CD4-positive, alpha-beta memory T cell (primary cell): ENCODE measurements at regions of chr5 and their contacts with region 1.

Region 1: DNA sequence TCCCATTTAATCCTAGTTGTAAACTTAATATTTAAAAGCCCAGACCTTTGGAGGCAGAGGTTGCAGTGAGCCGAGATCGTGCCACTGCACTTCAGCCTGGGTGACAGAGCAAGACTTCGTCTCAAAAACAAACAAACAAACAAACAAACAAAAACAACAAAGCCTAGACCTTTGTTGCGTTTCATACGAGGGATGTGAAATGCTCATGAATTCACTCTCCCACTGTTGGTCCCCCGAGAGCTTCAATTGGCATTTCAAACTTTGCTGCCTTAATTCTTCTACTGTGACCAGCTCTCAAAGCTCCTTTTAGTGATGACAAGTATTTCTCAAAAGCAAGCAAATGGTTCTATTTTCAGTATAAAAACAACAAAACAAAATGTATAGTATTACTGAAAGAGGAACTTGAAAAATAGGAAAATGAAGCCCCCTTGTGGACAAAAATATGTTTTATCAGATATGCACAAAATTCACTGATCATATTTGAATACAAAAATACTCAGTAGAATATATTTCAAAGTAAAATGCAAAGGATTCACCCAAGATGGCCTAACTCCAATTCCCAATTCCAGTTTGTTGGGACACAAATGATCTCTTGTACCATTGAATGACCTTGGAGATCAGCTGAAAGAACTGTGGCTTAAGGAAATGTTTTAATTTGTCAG is 140.4 kb downstream of the ESM1 start:
- DNase-seq: peak in 4 of 5 donors; percentile 54 to 63 (median 56)
- H3K4me3 ChIP-seq: no peak overlapping the region
- H3K4me3 Mint-ChIP-seq: peak overlapping the region in 5 of 8 donors; percentile 9 to 68 (median 49)
- H3K27ac ChIP-seq: no peak overlapping the region
- H3K27ac Mint-ChIP-seq: peak overlapping the region in 2 of 7 donors; percentile 12 to 26
- H3K4me1 ChIP-seq: no peaks in the 10 kb centered on the region
- H3K4me1 Mint-ChIP-seq: peaks cover 0 to 4% (median 2%) of the 10 kb centered on the region in 4 donors
- H3K27me3 ChIP-seq: no peaks in the 10 kb centered on the region
- H3K27me3 Mint-ChIP-seq: peaks cover 0 to 9% of the 10 kb centered on the region in 2 donors

Region 2: GRCh38 chr5:54492178-54492577 is 352.9 kb before region 1 on chr5:
- CTCF ChIA-PET with region 1: interaction called, 18 read pairs
- POLR2A ChIA-PET with region 1: no interaction called
- intact Hi-C with region 1: loop called (anchors 1 kb)
- DNase-seq: no peak
- H3K4me3 ChIP-seq: no peak overlapping the region
- H3K4me3 Mint-ChIP-seq: no peak overlapping the region
- H3K27ac ChIP-seq: no peak overlapping the region
- H3K27ac Mint-ChIP-seq: no peak overlapping the region
- H3K4me1 ChIP-seq: no peaks in the 10 kb centered on the region
- H3K4me1 Mint-ChIP-seq: peaks cover 0 to 4% (median 0%) of the 10 kb centered on the region in 4 donors
- H3K27me3 ChIP-seq: no peaks in the 10 kb centered on the region
- H3K27me3 Mint-ChIP-seq: peaks cover 3 to 7% of the 10 kb centered on the region in 2 donors

Region 3: GRCh38 chr5:54610197-54610944 is 234.7 kb before region 1 on chr5:
- CTCF ChIA-PET with region 1: interaction called, 11 read pairs
- POLR2A ChIA-PET with region 1: interaction called, 10 read pairs
- intact Hi-C with region 1: no loop called
- DNase-seq: peak; percentile 43 to 60 (median 55)
- H3K4me3 ChIP-seq: peak overlapping the region; percentile 3 to 49
- H3K4me3 Mint-ChIP-seq: peak overlapping the region; percentile 54 to 86 (median 77)
- H3K27ac ChIP-seq: no peak overlapping the region
- H3K27ac Mint-ChIP-seq: peak overlapping the region; percentile 64 to 84 (median 68)
- H3K4me1 ChIP-seq: peaks cover 22% of the 10 kb centered on the region
- H3K4me1 Mint-ChIP-seq: peaks cover 23 to 25% (median 25%) of the 10 kb centered on the region in 4 donors
- H3K27me3 ChIP-seq: no peaks in the 10 kb centered on the region
- H3K27me3 Mint-ChIP-seq: no peaks in the 10 kb centered on the region

Region 4: DNA sequence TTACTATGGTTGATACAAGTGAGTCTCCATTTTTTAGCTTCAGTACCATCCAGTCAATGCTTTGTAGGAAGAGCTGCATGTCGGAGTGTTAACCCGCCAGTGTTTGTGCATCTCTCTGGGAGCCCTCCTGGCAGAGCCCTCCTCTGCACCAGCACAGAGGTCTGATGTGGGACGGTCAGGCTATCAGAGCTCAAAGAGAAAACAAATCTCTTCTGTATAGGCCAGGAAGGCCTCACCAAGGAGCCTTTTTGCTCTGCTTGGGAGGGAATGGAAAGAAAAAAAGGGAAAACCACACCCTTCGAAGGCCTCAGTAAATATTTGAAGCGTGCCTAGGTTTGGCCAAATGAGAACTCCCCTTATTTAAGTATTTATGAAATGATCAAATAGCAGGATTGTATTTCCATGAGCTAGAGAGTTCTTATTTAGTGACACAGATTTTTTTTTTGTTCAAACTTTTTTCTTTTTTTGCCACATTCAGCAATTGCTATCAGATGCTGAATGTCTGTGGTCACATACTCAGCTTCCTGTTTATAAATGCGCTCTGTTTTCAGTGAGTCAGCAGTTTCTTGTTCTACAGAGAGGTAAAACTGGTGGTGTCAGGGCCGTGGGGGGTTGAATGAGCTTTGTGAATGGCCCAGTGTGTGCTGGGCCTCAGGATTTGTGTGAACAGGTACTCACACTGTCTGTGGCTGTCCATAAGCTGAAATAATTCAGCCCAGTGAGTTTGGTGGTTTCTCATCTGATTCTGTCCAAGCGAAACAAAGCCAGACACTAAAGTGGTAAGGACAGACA is 100.8 kb before region 1 on chr5:
- CTCF ChIA-PET with region 1: interaction called, 30 read pairs
- POLR2A ChIA-PET with region 1: interaction called, 5 read pairs
- intact Hi-C with region 1: loop called (anchors 10 kb)
- DNase-seq: peak; percentile 69 to 78 (median 75)
- H3K4me3 ChIP-seq: no peak overlapping the region
- H3K4me3 Mint-ChIP-seq: peak overlapping the region; percentile 24 to 84 (median 60)
- H3K27ac ChIP-seq: peak overlapping the region; percentile 20
- H3K27ac Mint-ChIP-seq: peak overlapping the region; percentile 82 to 93 (median 84)
- H3K4me1 ChIP-seq: peaks cover 49% of the 10 kb centered on the region
- H3K4me1 Mint-ChIP-seq: peaks cover 25 to 42% (median 33%) of the 10 kb centered on the region in 4 donors
- H3K27me3 ChIP-seq: no peaks in the 10 kb centered on the region
- H3K27me3 Mint-ChIP-seq: no peaks in the 10 kb centered on the region

Region 5: DNA sequence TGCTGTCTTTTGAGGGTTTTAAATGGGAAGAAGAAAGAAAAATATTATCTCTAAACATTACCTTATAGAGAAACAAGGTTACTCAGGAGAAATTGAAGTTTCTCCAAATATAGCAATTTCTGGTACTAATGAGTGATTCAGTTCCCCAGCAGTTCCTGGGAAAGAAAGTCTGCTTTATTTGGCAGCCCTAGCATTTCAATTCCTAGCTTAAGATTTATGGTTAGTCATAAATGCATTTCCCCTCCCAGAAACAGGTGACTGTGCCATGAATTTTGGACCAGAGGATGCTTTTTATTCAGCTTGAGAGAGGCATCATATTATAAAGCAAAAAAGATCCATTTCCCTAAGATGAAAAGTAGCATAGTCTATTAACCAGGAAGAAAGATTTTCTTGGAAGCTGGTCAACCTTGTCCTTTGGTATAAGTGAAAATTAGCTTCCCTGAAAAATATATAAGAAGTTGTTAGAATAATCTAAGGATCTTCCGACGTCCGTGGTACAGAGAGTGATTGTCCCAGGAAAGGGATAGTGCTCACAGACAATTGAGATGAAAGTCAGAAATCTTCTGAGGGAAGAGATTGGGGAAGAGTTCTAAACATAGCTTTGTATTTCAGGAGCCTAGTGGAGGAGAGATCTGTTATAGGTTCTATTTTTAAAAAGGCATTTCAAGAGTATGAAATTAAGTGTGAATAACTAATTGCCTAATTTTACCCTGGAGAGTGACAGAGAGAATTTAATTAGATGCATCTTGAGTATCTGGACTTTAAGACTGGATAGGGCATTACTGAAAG is 24.5 kb before region 1 on chr5:
- CTCF ChIA-PET with region 1: interaction called, 10 read pairs
- POLR2A ChIA-PET with region 1: interaction called, 4 read pairs
- intact Hi-C with region 1: no loop called
- DNase-seq: no peak
- H3K4me3 ChIP-seq: no peak overlapping the region
- H3K4me3 Mint-ChIP-seq: no peak overlapping the region
- H3K27ac ChIP-seq: no peak overlapping the region
- H3K27ac Mint-ChIP-seq: no peak overlapping the region
- H3K4me1 ChIP-seq: no peaks in the 10 kb centered on the region
- H3K4me1 Mint-ChIP-seq: no peaks in the 10 kb centered on the region
- H3K27me3 ChIP-seq: no peaks in the 10 kb centered on the region
- H3K27me3 Mint-ChIP-seq: peaks cover 5 to 6% of the 10 kb centered on the region in 2 donors

Region 6: DNA sequence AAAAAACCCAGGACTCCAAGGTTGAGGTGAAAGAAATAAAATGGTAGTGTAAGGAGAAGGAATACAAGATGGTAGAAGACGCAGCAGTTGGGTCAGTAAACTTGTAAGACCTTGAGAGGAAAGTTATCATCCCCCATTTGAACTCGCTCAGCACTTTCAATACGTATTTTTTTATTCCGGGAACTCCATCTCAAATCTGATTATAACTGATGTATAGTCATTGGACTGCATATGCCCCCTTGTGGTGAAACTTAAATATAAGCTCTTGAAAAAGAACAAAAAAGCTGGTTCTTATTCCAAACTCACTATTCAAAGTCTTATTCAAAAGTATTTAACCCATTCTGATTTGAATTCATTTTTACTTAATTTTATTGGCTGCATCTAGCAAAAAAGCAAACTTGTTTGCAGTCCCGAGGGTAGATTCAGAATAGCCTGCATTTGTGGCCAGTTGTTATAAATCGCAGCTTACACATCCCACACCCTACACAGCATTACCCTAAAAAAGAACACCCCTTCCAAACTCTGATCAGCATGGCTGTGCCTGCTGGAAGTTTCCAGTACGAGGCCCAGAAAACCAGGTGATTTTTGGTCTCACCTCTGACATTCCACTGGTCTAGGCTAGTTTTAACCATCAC is 22.4 kb after region 1 on chr5:
- CTCF ChIA-PET with region 1: interaction called, 39 read pairs
- POLR2A ChIA-PET with region 1: interaction called, 4 read pairs
- intact Hi-C with region 1: loop called (anchors 1 kb)
- DNase-seq: peak in 4 of 5 donors; percentile 58 to 66 (median 62)
- H3K4me3 ChIP-seq: no peak overlapping the region
- H3K4me3 Mint-ChIP-seq: peak overlapping the region in 7 of 8 donors; percentile 15 to 75 (median 39)
- H3K27ac ChIP-seq: no peak overlapping the region
- H3K27ac Mint-ChIP-seq: peak overlapping the region in 2 of 7 donors; percentile 3 to 11
- H3K4me1 ChIP-seq: peaks cover 4% of the 10 kb centered on the region
- H3K4me1 Mint-ChIP-seq: peaks cover 0 to 5% (median 4%) of the 10 kb centered on the region in 4 donors
- H3K27me3 ChIP-seq: peaks cover 3% of the 10 kb centered on the region
- H3K27me3 Mint-ChIP-seq: peaks cover 26% of the 10 kb centered on the region in 2 donors

Region 7: GRCh38 chr5:56737951-56738606 is 1893.0 kb after region 1 on chr5:
- CTCF ChIA-PET with region 1: no interaction called
- POLR2A ChIA-PET with region 1: no interaction called
- intact Hi-C with region 1: no loop called
- DNase-seq: no peak
- H3K4me3 ChIP-seq: no peak overlapping the region
- H3K4me3 Mint-ChIP-seq: peak overlapping the region in 1 of 8 donors; percentile 7
- H3K27ac ChIP-seq: no peak overlapping the region
- H3K27ac Mint-ChIP-seq: peak overlapping the region; percentile 7 to 86 (median 48)
- H3K4me1 ChIP-seq: peaks cover 53% of the 10 kb centered on the region
- H3K4me1 Mint-ChIP-seq: peaks cover 35 to 58% (median 49%) of the 10 kb centered on the region in 4 donors
- H3K27me3 ChIP-seq: no peaks in the 10 kb centered on the region
- H3K27me3 Mint-ChIP-seq: no peaks in the 10 kb centered on the region